Endothelial cell of umbilical vein (primary cell): ENCODE measurements at regions of chr7 and their contacts with region 1.

Region 1: DNA sequence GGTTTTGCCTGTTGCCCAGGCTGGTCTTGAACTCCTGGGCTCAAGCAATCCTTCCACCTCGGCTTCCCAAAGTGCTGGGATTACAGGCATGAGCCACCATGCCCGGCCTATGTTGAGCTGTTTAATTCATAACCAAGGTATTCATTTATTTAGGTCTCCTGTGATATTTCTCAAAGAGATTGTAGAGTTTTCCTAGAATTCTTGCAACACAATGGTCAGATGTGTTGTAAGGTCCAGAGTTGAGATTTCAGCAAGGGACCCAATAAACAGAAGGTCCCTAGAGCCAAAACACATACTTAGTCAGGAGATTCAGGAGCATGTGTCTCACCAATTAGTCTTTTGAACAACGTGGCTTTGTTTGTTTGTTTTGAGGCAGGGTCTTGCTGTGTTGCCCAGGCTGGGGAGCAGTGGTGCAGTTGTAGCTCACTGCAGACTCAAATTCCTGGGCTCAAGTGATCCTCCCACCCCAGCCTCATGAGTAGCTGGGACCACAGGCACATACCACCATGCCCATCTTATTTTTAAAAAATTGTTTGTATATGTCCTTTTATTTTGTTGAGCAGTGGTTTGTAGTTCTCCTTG is 321.3 kb upstream of the GALNT17 start:
- DNase-seq: no peak
- H3K4me3 ChIP-seq: no peak overlapping the region
- H3K27ac ChIP-seq: no peak overlapping the region
- H3K4me1 ChIP-seq: no peaks in the 10 kb centered on the region
- H3K27me3 ChIP-seq: no peaks in the 10 kb centered on the region
- CTCF ChIP-seq: no peak
- POLR2A ChIP-seq: no peak

Region 2: GRCh38 chr7:70529914-70530585 is 280.6 kb before region 1 on chr7:
- CTCF ChIA-PET with region 1: no interaction called
- POLR2A ChIA-PET with region 1: no interaction called
- dilution Hi-C with region 1: no loop called
- intact Hi-C with region 1: no loop called
- DNase-seq: no peak
- H3K4me3 ChIP-seq: no peak overlapping the region
- H3K27ac ChIP-seq: no peak overlapping the region
- H3K4me1 ChIP-seq: no peaks in the 10 kb centered on the region
- H3K27me3 ChIP-seq: no peaks in the 10 kb centered on the region
- CTCF ChIP-seq: no peak
- POLR2A ChIP-seq: no peak

Region 3: DNA sequence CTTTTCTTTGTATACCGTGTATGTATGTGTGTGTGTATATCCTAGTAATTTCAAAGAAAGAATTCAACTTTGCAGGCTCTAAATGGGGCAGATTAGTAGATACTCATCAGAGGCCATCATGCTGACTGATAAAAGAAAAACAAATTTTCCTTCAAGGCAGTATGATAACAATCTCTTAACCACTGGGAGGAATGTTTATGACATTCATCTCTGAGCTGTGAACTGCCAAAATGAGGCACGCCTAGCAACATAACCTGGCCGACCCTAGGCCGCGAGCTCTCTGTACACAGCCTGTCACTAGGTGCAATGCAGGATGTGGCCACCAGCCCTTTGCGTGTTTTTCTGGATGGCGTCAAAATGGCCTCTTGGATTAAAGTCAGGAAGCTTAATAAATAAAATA is 22.4 kb before region 1 on chr7:
- CTCF ChIA-PET with region 1: no interaction called
- POLR2A ChIA-PET with region 1: no interaction called
- dilution Hi-C with region 1: no loop called
- intact Hi-C with region 1: no loop called
- DNase-seq: no peak
- H3K4me3 ChIP-seq: no peak overlapping the region
- H3K27ac ChIP-seq: no peak overlapping the region
- H3K4me1 ChIP-seq: no peaks in the 10 kb centered on the region
- H3K27me3 ChIP-seq: no peaks in the 10 kb centered on the region
- CTCF ChIP-seq: no peak
- POLR2A ChIP-seq: no peak

Region 4: GRCh38 chr7:71808115-71808514 is 997.5 kb after region 1 on chr7:
- CTCF ChIA-PET with region 1: no interaction called
- POLR2A ChIA-PET with region 1: interaction called, 11 read pairs
- dilution Hi-C with region 1: no loop called
- intact Hi-C with region 1: no loop called
- DNase-seq: no peak
- H3K4me3 ChIP-seq: no peak overlapping the region
- H3K27ac ChIP-seq: no peak overlapping the region
- H3K4me1 ChIP-seq: no peaks in the 10 kb centered on the region
- H3K27me3 ChIP-seq: no peaks in the 10 kb centered on the region
- CTCF ChIP-seq: no peak
- POLR2A ChIP-seq: no peak